AG04450 (cell line): ENCODE measurements at regions of chr5 and their contacts with region 1.

Region 1: GRCh38 chr5:173925448-173926071 is 37.4 kb downstream of the CPEB4 start:
- DNase-seq: no peak
- H3K4me3 ChIP-seq: no peak overlapping the region
- H3K27ac ChIP-seq: no peak overlapping the region
- H3K27me3 ChIP-seq: no peaks in the 10 kb centered on the region
- CTCF ChIP-seq: peak; percentile 60

Region 2: GRCh38 chr5:173643963-173644362 is 281.6 kb before region 1 on chr5:
- CTCF ChIA-PET with region 1: interaction called, 13 read pairs
- POLR2A ChIA-PET with region 1: no interaction called
- DNase-seq: no peak
- H3K4me3 ChIP-seq: no peak overlapping the region
- H3K27ac ChIP-seq: no peak overlapping the region
- H3K27me3 ChIP-seq: peaks cover 20% of the 10 kb centered on the region
- CTCF ChIP-seq: no peak

Region 3: DNA sequence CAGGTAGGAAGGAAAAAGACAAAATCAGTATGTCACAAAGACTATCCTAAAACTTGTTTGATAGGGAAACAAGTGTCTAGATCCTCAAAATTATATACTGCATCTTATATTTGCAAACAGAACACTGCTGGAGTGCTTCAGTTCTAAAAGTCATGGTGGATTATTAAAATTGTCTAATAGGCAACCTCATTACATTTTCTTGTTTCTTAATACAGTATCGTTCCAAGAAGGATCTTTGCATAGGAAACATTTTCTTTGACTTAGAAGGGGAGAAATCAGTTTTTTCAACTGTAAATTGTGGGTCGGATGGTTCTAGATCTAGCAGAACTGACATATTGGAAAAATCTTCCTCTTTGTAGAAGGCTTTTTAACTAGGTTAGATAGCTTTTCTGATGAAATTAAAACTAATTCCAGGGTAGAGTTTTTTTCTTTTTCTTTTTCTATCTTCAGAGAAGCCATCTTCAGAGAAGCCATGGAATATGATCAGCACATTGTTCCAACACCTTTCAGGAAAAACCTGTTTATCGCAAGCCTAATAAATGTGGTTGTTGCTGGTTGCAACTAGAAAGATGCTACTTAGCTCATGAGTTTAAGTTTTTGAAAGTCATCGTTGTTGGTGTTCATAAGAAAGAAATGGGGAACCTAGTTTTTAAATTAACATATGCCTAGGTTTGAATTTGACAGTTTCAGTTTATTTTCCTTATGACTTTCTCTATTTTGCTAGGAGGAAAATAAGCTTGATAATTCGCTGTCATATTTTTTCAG is 30.0 kb before region 1 on chr5:
- CTCF ChIA-PET with region 1: interaction called, 10 read pairs
- POLR2A ChIA-PET with region 1: no interaction called
- DNase-seq: no peak
- H3K4me3 ChIP-seq: no peak overlapping the region
- H3K27ac ChIP-seq: no peak overlapping the region
- H3K27me3 ChIP-seq: no peaks in the 10 kb centered on the region
- CTCF ChIP-seq: no peak

Region 4: GRCh38 chr5:173915310-173916014 is 10.1 kb before region 1 on chr5:
- CTCF ChIA-PET with region 1: interaction called, 33 read pairs
- POLR2A ChIA-PET with region 1: no interaction called
- DNase-seq: no peak
- H3K4me3 ChIP-seq: no peak overlapping the region
- H3K27ac ChIP-seq: no peak overlapping the region
- H3K27me3 ChIP-seq: no peaks in the 10 kb centered on the region
- CTCF ChIP-seq: no peak

Region 5: DNA sequence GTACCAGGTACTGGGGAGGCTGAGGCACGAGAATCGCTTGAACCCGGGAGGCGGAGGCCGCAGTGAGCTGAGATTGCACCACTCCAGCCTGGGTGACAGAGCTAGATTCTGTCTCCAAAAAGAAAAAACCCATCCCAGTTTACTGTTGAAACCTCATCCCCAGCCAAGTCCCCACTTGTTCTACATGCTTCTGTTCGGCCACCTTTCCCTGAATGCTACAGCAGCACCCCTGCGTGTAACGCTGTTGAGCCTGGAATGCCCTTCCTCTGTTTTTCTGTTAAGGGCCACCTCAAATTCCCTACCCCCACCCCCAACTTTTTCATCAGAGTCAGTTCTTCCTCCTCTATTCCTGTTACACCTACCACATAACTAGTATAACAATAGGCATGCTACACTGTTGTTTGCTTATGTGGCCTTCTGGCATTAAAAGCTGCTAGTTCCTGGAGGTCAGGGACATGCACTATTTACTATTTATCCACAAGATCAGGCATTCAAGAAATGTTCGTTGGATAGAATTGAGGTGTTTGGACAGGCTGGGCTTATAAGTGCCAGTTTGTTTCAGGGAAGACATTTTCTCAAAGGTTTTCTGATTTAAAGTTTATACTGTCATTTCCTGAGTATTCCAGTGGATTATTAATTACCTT is 16.3 kb after region 1 on chr5:
- CTCF ChIA-PET with region 1: interaction called, 51 read pairs
- POLR2A ChIA-PET with region 1: no interaction called
- DNase-seq: no peak
- H3K4me3 ChIP-seq: no peak overlapping the region
- H3K27ac ChIP-seq: no peak overlapping the region
- H3K27me3 ChIP-seq: no peaks in the 10 kb centered on the region
- CTCF ChIP-seq: no peak